ENCODE measurements at regions of chr12 and their contacts with region 1.

Region 1: GRCh38 chr12:7959701-7960121 is 23.7 kb upstream of the SLC2A3 start:
- DNase-seq: peak; percentile 63
- ATAC-seq: peak; percentile 43
- H3K4me3 Mint-ChIP-seq: peak overlapping the region; percentile 97
- H3K27ac Mint-ChIP-seq: peak overlapping the region; percentile 98
- H3K4me1 Mint-ChIP-seq: peaks cover 35% of the 10 kb centered on the region
- H3K27me3 Mint-ChIP-seq: no peaks in the 10 kb centered on the region
- CTCF ChIP-seq: no peak

Region 2: DNA sequence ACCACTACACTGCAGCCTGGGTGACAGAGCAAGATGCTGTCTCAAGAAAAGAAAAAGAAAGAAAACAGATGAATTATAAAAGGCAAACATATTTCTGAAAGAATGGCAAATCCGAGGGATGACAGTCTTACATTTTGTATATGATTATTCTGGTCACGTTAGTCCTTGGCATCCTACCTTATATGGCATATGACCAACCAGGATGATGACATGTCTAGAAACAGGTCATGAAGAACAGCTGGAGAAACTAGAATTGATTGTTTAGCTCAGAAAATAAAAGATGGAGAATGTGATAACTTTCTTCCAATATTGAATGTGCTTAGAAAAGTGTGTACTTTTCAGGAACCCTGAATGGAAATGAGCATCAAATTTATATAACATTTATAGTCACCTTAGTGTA is 106.2 kb before region 1 on chr12:
- CTCF ChIA-PET with region 1: no interaction called
- POLR2A ChIA-PET with region 1: no interaction called
- intact Hi-C with region 1: no loop called
- DNase-seq: no peak
- ATAC-seq: no peak
- H3K4me3 Mint-ChIP-seq: no peak overlapping the region
- H3K27ac Mint-ChIP-seq: no peak overlapping the region
- H3K4me1 Mint-ChIP-seq: no peaks in the 10 kb centered on the region
- H3K27me3 Mint-ChIP-seq: peaks cover 10% of the 10 kb centered on the region
- CTCF ChIP-seq: no peak

Region 3: DNA sequence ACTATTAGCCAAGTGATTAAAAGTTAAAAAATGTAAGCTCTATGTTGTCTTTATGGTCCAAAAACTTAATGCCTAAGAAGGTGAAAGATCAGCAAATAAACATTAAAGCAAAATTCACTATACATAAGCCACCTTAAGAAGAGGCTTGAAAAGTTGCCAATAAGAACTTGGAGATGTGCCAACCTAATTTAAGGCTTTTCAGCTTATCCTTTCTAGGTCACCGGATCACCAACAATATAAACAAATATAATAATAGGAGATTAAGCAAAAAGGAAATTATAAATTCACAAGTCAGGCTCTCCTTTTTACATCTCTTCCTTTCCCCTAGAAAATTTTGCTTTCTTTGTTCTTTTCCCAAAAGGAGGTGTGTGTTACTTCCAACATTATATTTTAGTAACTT is 54.6 kb before region 1 on chr12:
- CTCF ChIA-PET with region 1: no interaction called
- POLR2A ChIA-PET with region 1: no interaction called
- intact Hi-C with region 1: no loop called
- DNase-seq: no peak
- ATAC-seq: no peak
- H3K4me3 Mint-ChIP-seq: no peak overlapping the region
- H3K27ac Mint-ChIP-seq: no peak overlapping the region
- H3K4me1 Mint-ChIP-seq: no peaks in the 10 kb centered on the region
- H3K27me3 Mint-ChIP-seq: no peaks in the 10 kb centered on the region
- CTCF ChIP-seq: no peak

Region 4: DNA sequence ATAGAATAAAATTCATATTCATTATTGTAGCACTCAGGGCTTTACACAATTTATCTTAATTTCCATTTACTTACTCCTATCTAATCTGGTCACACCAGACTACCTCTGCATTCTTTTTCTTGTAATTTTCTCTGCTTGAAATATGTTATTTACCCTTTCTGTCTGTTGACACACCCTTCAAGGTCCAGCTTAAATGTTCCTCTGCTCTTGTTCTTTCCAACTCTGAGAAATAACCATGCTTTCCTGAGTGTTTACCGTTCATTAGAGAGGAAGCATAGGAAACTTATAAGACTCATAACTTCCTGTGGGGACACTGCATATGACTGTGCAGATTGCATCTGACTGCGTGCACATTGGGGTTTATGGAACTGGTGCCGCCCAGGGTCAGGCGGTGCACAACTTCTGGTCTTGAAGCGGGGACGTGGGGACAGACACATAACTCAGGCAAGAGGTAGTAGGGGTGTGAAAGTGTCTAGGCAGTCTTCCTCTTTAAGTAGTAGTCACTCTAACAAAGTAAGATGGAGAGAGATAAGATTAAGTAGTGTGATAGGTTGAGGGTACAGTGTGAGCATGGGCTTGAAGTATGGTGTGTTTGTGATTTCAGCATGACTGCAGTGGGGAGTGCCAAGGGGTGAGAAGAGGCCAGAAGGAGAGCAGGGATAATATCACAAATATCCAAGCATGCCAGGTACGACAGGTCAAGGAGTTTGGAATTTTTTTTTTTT is 30.3 kb after region 1 on chr12:
- CTCF ChIA-PET with region 1: interaction called, 30 read pairs
- POLR2A ChIA-PET with region 1: interaction called, 14 read pairs
- intact Hi-C with region 1: no loop called
- DNase-seq: peak; percentile 93
- ATAC-seq: peak; percentile 94
- H3K4me3 Mint-ChIP-seq: peak overlapping the region; percentile 51
- H3K27ac Mint-ChIP-seq: peak overlapping the region; percentile 84
- H3K4me1 Mint-ChIP-seq: peaks cover 34% of the 10 kb centered on the region
- H3K27me3 Mint-ChIP-seq: no peaks in the 10 kb centered on the region
- CTCF ChIP-seq: no peak

Region 5: DNA sequence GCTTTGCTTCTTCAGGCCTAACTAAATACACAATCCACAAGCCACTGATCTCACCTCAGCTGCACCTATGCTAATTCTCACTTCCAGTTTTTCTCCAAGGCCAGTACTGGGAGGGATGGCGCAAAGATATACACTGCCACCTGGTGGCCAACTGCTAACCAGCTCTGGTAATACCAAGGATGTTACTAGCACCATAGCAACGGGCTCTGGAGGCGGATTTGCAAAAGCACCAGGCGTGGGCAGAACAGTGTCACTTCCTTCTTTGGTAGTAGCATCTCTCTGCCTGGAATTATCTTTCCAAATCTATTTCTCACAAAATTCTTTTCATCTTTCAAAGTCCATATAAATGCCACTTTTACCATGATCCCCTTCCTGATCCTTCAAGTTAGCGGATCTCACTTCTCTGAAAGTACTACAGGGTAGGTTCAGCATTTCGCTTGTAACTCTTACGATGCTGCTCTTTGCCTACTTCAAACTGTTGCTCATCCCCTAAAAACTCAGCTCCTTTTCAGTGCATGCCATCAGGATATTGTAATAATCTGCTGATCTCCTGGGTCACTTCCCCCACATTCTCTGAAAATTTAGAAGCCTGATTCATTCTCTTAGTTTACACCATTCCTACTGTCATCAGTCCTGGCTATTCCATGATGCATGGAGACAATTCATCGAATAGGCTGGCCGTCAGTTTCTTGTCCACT is 35.7 kb after region 1 on chr12:
- CTCF ChIA-PET with region 1: interaction called, 30 read pairs
- POLR2A ChIA-PET with region 1: interaction called, 14 read pairs
- intact Hi-C with region 1: no loop called
- DNase-seq: peak; percentile 96
- ATAC-seq: peak; percentile 90
- H3K4me3 Mint-ChIP-seq: no peak overlapping the region
- H3K27ac Mint-ChIP-seq: no peak overlapping the region
- H3K4me1 Mint-ChIP-seq: peaks cover 22% of the 10 kb centered on the region
- H3K27me3 Mint-ChIP-seq: no peaks in the 10 kb centered on the region
- CTCF ChIP-seq: peak; percentile 82

Measured in activated CD8-positive, alpha-beta T cell treated with anti-CD3 and anti-CD28 coated beads for 36 hours (primary cell).